WTC11 (cell line): ENCODE measurements at regions of chr11 and their contacts with region 1.

Region 1: GRCh38 chr11:131674051-131674755 is 303.8 kb downstream of the NTM start:
- DNase-seq: peak; percentile 86
- ATAC-seq: peak; percentile 62
- H3K4me3 Mint-ChIP-seq: no peak overlapping the region
- H3K27ac Mint-ChIP-seq: no peak overlapping the region
- H3K4me1 Mint-ChIP-seq: peaks cover 32% of the 10 kb centered on the region
- H3K27me3 Mint-ChIP-seq: no peaks in the 10 kb centered on the region; the same call in 1 of the 2 replicates
- CTCF ChIP-seq: peak; percentile 98

Region 2: DNA sequence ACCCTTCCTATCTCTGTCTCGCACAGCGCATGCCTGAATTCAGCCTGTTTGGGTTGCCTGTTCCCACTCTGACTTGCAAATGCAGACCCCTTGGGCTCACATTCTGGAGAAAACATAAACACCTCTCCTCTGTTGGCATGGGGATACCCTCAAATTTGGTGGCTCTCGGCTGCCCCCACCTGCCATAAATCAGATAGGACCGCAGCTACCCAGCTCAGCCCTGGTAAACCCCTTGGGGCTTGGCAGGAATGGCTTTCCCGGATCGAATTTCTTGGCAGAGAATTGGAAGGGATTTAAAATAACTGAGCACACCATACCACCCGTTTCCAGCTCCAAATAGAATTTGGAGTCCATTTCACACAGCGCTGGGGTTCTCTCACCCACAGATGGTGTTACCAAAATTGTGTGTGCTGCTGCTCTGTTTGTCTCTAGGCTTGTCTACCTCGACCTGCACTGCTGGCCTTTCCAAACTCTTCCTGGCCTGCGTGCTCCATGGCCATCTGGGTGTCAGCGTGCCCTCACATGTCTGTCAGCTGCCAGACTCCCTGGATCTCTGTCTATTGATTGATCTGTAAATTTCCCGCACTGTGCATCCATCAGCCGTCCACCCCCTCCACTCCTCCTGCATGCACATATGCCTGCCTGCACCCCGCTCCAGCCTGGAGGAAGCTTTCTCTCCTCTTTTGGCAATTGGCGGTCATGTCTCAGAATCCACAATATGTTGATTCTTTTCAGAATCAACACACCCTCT is 169.8 kb before region 1 on chr11:
- CTCF ChIA-PET with region 1: interaction called, 10 read pairs
- POLR2A ChIA-PET with region 1: no interaction called
- DNase-seq: peak; percentile 78
- ATAC-seq: peak; percentile 99
- H3K4me3 Mint-ChIP-seq: no peak overlapping the region
- H3K27ac Mint-ChIP-seq: 0 out of 2 replicates have a peak overlapping the region, but pooled peaks have one; percentile 26
- H3K4me1 Mint-ChIP-seq: peaks cover 18% of the 10 kb centered on the region
- H3K27me3 Mint-ChIP-seq: no peaks in the 10 kb centered on the region
- CTCF ChIP-seq: peak; percentile 36

Region 3: DNA sequence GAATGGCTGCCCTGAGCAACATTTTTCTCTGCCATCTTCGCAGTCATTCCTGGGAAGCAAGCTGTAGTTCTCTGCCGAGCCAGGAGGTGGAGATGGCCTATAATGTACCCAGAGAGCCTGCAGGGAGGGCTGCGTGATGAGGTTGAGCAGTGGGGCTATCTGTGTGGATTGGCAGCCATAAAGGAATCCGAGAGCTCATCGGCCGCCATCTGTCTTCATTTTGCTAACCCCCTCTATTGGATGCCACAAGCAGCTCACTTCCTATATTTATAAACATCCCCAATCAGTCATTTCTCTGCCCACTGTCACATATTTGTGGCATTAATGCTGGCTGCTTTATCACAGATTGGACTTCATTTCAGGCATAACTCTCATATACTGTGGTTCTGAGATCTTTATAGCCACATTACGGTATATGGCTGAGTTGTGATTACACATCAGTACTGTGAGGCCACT is 94.2 kb before region 1 on chr11:
- CTCF ChIA-PET with region 1: interaction called, 114 read pairs
- POLR2A ChIA-PET with region 1: interaction called, 3 read pairs
- DNase-seq: peak; percentile 70
- ATAC-seq: peak; percentile 97
- H3K4me3 Mint-ChIP-seq: no peak overlapping the region
- H3K27ac Mint-ChIP-seq: no peak overlapping the region
- H3K4me1 Mint-ChIP-seq: peaks cover 40% of the 10 kb centered on the region
- H3K27me3 Mint-ChIP-seq: no peaks in the 10 kb centered on the region
- CTCF ChIP-seq: peak; percentile 68

Region 4: GRCh38 chr11:131609337-131609736 is 64.9 kb before region 1 on chr11:
- CTCF ChIA-PET with region 1: interaction called, 17 read pairs
- POLR2A ChIA-PET with region 1: interaction called, 8 read pairs
- DNase-seq: no peak
- ATAC-seq: no peak; the same call in 1 of the 2 replicates
- H3K4me3 Mint-ChIP-seq: no peak overlapping the region
- H3K27ac Mint-ChIP-seq: no peak overlapping the region
- H3K4me1 Mint-ChIP-seq: peaks cover 30% of the 10 kb centered on the region
- H3K27me3 Mint-ChIP-seq: peaks cover 40% of the 10 kb centered on the region
- CTCF ChIP-seq: no peak

Region 5: GRCh38 chr11:131658952-131659351 is 15.3 kb before region 1 on chr11:
- CTCF ChIA-PET with region 1: interaction called, 69 read pairs
- POLR2A ChIA-PET with region 1: interaction called, 3 read pairs
- DNase-seq: no peak
- ATAC-seq: no peak
- H3K4me3 Mint-ChIP-seq: no peak overlapping the region
- H3K27ac Mint-ChIP-seq: no peak overlapping the region
- H3K4me1 Mint-ChIP-seq: peaks cover 94% of the 10 kb centered on the region
- H3K27me3 Mint-ChIP-seq: no peaks in the 10 kb centered on the region; the same call in 1 of the 2 replicates
- CTCF ChIP-seq: no peak

Region 6: DNA sequence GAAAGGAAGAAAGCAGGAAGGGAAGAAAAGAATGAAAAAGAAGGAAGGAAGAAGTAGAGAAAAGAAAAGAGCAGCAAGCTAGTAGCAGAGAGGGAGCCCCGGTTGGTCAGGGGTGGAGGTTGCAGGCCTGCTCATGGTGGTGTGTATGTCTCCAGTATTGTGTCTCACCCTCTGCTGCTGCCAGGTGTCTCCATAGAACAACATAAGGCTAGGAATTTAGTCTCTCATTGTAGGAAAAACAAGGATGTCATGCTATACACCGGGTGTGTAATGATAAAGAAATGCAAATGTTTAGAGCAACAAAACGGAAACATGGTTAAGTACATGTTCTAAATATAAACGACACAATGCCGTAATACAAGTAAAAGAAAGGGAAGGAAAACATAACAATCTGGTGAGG is 38.7 kb after region 1 on chr11:
- CTCF ChIA-PET with region 1: no interaction called
- POLR2A ChIA-PET with region 1: no interaction called
- DNase-seq: no peak
- ATAC-seq: no peak
- H3K4me3 Mint-ChIP-seq: no peak overlapping the region
- H3K27ac Mint-ChIP-seq: no peak overlapping the region
- H3K4me1 Mint-ChIP-seq: no peaks in the 10 kb centered on the region
- H3K27me3 Mint-ChIP-seq: no peaks in the 10 kb centered on the region
- CTCF ChIP-seq: no peak

Region 7: GRCh38 chr11:131792243-131792642 is 118.0 kb after region 1 on chr11:
- CTCF ChIA-PET with region 1: no interaction called
- POLR2A ChIA-PET with region 1: no interaction called
- DNase-seq: no peak
- ATAC-seq: no peak
- H3K4me3 Mint-ChIP-seq: no peak overlapping the region
- H3K27ac Mint-ChIP-seq: no peak overlapping the region
- H3K4me1 Mint-ChIP-seq: peaks cover 9% of the 10 kb centered on the region
- H3K27me3 Mint-ChIP-seq: no peaks in the 10 kb centered on the region
- CTCF ChIP-seq: no peak

Region 8: GRCh38 chr11:132106096-132106982 is 432.1 kb after region 1 on chr11:
- CTCF ChIA-PET with region 1: no interaction called
- POLR2A ChIA-PET with region 1: no interaction called
- DNase-seq: no peak
- ATAC-seq: no peak
- H3K4me3 Mint-ChIP-seq: no peak overlapping the region
- H3K27ac Mint-ChIP-seq: no peak overlapping the region
- H3K4me1 Mint-ChIP-seq: peaks cover 31% of the 10 kb centered on the region
- H3K27me3 Mint-ChIP-seq: no peaks in the 10 kb centered on the region
- CTCF ChIP-seq: no peak